Right ventricle myocardium superior (tissue), 1 donor: ENCODE measurements at regions of chr9 and their contacts with region 1.

Region 1: GRCh38 chr9:20178197-20178596 is 389.4 kb upstream of the SLC24A2 start:
- DNase-seq: no peak
- ATAC-seq: no peak

Region 2: GRCh38 chr9:20236676-20237075 is 58.5 kb after region 1 on chr9:
- intact Hi-C with region 1: loop called (anchors 10 kb)
- DNase-seq: no peak
- ATAC-seq: no peak